GM23248 (cell line): ENCODE measurements at regions of chr17 and their contacts with region 1.

Region 1: DNA sequence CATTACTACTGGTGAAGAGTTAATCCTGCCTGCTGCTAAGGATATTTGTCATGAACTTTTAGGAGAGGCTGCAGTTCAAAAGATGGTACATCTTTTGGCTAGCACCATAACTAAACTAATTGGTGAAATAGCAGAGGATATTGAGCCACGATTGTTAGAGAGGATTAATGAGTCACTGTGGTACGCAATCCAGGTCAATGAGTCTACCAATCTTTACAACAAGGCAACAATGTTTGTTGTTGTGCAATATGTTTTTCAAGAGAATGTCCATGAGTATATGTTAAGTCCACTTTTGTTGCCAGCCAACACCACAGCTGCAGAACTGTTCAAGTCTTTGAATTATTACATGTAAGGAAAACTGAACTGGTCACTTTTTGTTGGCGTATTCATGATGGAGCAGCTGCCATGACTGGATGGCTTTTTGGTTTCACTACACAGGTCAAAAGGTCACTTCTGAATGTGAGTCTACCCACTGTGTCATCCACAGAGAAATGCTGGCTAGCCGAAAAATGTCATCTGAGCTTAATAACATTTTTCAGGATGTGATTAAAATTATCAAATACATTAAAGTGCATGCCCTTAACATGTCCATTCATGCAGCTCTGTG is 402.6 kb upstream of the KIF2B start:
- DNase-seq: no peak
- H3K4me3 ChIP-seq: no peak overlapping the region
- H3K27ac ChIP-seq: no peak overlapping the region
- H3K4me1 ChIP-seq: no peaks in the 10 kb centered on the region
- H3K27me3 ChIP-seq: no peaks in the 10 kb centered on the region

Region 2: DNA sequence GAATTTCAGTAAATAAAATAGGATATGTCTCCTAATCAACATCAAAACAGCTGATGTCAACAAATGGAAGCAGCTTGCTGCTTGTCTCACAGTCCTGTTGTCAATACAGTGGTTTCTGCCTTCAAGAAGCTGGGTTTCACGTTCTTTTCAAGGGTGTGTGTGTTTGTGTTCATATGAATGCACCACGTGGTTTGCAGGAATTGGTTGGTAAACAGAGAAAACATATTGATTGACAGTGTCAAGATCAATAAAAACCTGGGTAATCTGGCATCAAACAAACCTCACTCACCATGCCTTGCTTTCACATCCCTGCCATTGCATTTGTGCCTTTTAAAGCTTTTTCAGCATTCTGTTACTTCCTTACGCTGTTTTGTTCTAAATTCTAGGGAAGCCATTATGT is 676.0 kb before region 1 on chr17:
- in situ Hi-C with region 1: no loop called
- DNase-seq: no peak
- H3K4me3 ChIP-seq: no peak overlapping the region
- H3K27ac ChIP-seq: no peak overlapping the region
- H3K4me1 ChIP-seq: no peaks in the 10 kb centered on the region
- H3K27me3 ChIP-seq: no peaks in the 10 kb centered on the region

Region 3: DNA sequence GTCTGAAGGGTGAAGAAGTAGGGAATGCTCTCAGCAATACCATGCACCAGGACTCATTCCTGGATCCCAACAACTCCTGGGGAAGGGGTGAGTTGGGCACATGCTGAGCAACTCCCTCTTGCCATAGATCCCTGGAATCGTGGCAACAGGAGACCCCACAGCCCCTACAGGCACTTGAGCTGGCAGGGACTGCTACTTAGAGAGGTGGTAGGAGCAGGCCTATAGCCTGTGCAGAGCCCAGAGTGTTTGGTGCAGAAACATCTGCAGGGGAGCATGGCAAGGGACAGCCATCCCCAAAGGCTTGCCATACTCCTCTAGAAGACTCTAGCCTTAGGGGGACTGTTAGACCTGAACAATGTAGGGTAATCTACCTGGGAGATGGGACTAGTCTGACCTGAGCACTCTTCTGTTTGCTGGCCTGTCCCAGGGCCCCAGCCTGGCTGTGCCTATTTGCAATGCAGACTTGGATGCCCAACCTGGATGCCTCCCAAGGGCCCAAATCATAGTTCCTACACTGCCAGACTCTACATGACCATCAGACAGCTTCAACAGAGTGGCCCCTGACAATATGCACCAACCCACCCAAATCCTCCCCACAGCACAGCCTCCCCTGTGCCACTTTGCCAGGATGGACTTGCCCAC is 166.1 kb before region 1 on chr17:
- in situ Hi-C with region 1: no loop called
- DNase-seq: no peak
- H3K4me3 ChIP-seq: no peak overlapping the region
- H3K27ac ChIP-seq: no peak overlapping the region
- H3K4me1 ChIP-seq: no peaks in the 10 kb centered on the region
- H3K27me3 ChIP-seq: no peaks in the 10 kb centered on the region

Region 4: DNA sequence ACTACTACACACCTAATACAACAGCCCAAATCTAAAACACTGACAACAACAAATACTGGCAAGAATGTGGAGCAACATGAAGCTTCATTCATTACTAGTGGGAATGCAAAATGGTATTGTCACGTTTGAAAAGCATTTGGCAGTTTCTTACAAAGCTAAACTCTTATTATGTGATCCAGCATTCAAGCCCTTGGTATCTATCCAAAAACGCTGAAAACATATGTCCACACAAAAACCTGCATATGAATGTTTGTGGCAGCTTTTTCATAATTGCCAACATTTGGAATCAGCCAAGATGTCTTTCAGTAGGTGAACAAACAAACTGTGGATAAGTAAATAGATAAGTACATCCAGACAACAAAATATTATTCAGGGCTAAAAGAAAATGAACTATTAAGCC is 98.5 kb before region 1 on chr17:
- in situ Hi-C with region 1: no loop called
- DNase-seq: no peak
- H3K4me3 ChIP-seq: no peak overlapping the region
- H3K27ac ChIP-seq: no peak overlapping the region
- H3K4me1 ChIP-seq: no peaks in the 10 kb centered on the region
- H3K27me3 ChIP-seq: no peaks in the 10 kb centered on the region

Region 5: DNA sequence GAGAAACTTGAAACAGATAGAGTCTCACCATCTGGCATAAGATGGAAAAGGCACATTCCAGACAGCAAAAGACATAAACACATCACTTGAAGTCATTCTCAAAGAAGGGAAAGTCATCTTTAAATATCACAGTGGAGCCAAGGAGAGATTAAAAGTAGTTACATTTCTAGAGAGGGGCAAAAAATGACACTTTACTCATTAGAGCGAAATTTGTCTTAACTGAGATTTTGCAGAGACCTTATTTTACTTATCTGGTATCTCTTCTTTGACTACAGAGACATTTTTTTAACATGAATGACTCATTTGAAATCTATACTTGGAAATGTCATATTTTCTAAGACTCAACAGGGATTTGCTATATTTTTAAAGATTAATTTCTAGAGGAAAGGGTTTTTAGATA is 63.6 kb after region 1 on chr17:
- in situ Hi-C with region 1: loop called (anchors 10 kb)
- DNase-seq: no peak
- H3K4me3 ChIP-seq: no peak overlapping the region
- H3K27ac ChIP-seq: no peak overlapping the region
- H3K4me1 ChIP-seq: no peaks in the 10 kb centered on the region
- H3K27me3 ChIP-seq: no peaks in the 10 kb centered on the region